WTC11 (cell line): ENCODE measurements at regions of chr20 and their contacts with region 1.

Region 1: GRCh38 chr20:58618351-58619076 is 32.6 kb upstream of the STX16 start:
- DNase-seq: no peak
- ATAC-seq: no peak
- H3K4me3 Mint-ChIP-seq: no peak overlapping the region
- H3K27ac Mint-ChIP-seq: no peak overlapping the region
- H3K4me1 Mint-ChIP-seq: peaks cover 21% of the 10 kb centered on the region
- H3K27me3 Mint-ChIP-seq: peaks cover 45% of the 10 kb centered on the region
- CTCF ChIP-seq: no peak

Region 2: GRCh38 chr20:58515233-58516184 is 103.0 kb before region 1 on chr20 and contains the start of gene APCDD1L:
- CTCF ChIA-PET with region 1: interaction called, 8 read pairs
- POLR2A ChIA-PET with region 1: interaction called, 14 read pairs
- DNase-seq: no peak
- ATAC-seq: peak; percentile 67
- H3K4me3 Mint-ChIP-seq: peak within 1 kb of the TSS; percentile 78
- H3K27ac Mint-ChIP-seq: no peak within 1 kb of the TSS
- H3K4me1 Mint-ChIP-seq: peaks cover 23% of the 10 kb centered on the region
- H3K27me3 Mint-ChIP-seq: peaks cover 64% of the 10 kb centered on the region
- CTCF ChIP-seq: no peak
- total RNA-seq, gene APCDD1L: 2.4 to 3.2 TPM (median 2.5 TPM) in 3 replicates